Tibial artery (tissue), 4 donors: ENCODE measurements at regions of chr1 and their contacts with region 1.

Region 1: DNA sequence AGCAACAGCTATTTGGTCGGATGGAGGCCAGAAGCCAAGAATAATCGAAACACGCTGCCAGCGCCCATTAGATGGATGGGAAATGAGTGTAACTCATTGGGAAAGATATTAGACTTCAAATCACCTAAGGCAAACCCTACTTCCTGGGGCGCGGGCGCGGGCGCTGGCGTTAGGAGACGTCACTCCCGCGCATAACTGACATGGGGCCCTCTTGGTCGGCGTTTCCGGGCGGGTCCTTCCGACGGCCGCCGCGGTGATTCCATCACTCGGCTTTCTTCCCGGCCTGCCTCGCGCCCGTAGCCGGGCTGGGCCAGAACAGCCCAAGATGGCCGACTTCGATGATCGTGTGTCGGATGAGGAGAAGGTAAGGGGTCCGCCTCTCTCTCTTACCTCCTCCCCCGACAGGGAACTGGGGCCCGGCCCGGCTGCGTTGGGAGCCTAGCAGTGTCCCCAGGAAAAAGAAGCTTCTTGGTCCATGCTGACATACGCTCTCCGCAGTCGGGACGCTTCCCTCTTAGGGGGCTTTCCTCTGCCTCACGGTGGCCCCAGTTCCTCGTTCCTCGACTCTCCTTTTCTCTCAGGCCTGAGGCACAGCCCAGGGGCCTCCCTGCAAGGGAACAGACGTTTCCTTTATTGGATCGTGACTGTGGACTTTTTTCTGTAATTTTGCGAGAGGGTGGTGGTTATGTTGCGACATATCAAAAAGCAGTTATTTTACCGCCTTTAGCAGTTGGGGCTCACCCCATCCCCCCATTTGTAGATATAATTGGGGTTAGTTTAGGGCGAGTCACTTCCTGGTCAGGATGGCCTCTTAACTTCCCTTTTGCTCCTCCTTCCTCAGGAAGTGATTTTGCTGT is at the start of gene CAPZA1:
- DNase-seq: peak; percentile 89 to 95
- H3K4me3 ChIP-seq: peak within 1 kb of the TSS; percentile 67 to 96
- H3K27ac ChIP-seq: peak within 1 kb of the TSS; percentile 98 to 100
- H3K4me1 ChIP-seq: peaks cover 0 to 48% (median 25%) of the 10 kb centered on the region in 4 donors
- H3K27me3 ChIP-seq: no peaks in the 10 kb centered on the region
- CTCF ChIP-seq: no peak

Region 2: DNA sequence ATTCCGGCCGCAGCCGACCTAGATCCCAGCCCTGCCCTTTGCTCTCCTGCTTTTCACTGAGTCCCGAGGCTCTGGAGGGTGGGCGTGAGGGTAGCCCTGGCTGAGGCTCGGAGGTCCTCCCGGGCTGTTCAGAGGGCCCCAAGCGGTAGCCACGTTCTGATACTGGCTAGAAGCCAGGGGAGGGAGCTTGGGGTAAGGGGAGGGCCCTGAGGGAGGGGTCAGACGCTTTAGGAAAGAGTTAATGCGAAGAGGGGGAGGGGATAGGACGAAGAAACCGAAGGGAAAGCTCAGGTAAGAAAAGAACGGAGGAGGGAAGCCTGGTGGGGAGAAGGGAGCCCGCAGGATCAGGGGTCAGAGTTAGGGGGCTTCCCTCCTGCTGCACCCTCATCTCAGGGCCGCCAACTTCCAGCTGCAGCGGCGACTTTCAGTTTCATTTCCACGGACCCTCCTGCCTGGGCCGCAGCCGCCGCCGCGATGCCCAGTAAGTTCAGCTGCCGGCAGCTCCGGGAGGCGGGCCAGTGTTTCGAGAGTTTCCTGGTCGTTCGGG is 54.8 kb after region 1 on chr1 and contains the start of gene MOV10:
- intact Hi-C with region 1: loop called (anchors 5 kb)
- DNase-seq: peak; percentile 70 to 81
- H3K4me3 ChIP-seq: peak within 1 kb of the TSS; percentile 65 to 78
- H3K27ac ChIP-seq: peak within 1 kb of the TSS; percentile 85 to 94
- H3K4me1 ChIP-seq: peaks cover 0 to 28% (median 15%) of the 10 kb centered on the region in 4 donors
- H3K27me3 ChIP-seq: no peaks in the 10 kb centered on the region
- CTCF ChIP-seq: no peak

Region 3: GRCh38 chr1:112706908-112707663 is 87.3 kb after region 1 on chr1 and contains the start of gene RHOC:
- intact Hi-C with region 1: loop called (anchors 2 kb)
- DNase-seq: peak; percentile 91 to 95
- H3K4me3 ChIP-seq: peak within 1 kb of the TSS; percentile 78 to 96
- H3K27ac ChIP-seq: peak within 1 kb of the TSS; percentile 96 to 99
- H3K4me1 ChIP-seq: peaks cover 0 to 47% (median 38%) of the 10 kb centered on the region in 4 donors
- H3K27me3 ChIP-seq: no peaks in the 10 kb centered on the region
- CTCF ChIP-seq: peak; percentile 92 to 97